Activated naive CD4-positive, alpha-beta T cell treated with anti-CD3 and anti-CD28 coated beads for 36 hours (primary cell): ENCODE measurements at regions of chr1 and their contacts with region 1.

Region 1: GRCh38 chr1:45018599-45019230 is 6.7 kb downstream of the UROD start:
- DNase-seq: peak; percentile 81
- H3K4me3 Mint-ChIP-seq: no peak overlapping the region
- H3K27ac Mint-ChIP-seq: no peak overlapping the region
- H3K4me1 Mint-ChIP-seq: peaks cover 13% of the 10 kb centered on the region
- H3K27me3 Mint-ChIP-seq: no peaks in the 10 kb centered on the region

Region 2: GRCh38 chr1:45033356-45033755 is 14.6 kb after region 1 on chr1:
- CTCF ChIA-PET with region 1: interaction called, 16 read pairs
- intact Hi-C with region 1: no loop called
- DNase-seq: no peak
- H3K4me3 Mint-ChIP-seq: no peak overlapping the region
- H3K27ac Mint-ChIP-seq: no peak overlapping the region
- H3K4me1 Mint-ChIP-seq: peaks cover 2% of the 10 kb centered on the region
- H3K27me3 Mint-ChIP-seq: no peaks in the 10 kb centered on the region

Region 3: GRCh38 chr1:45103534-45103933 is 84.8 kb after region 1 on chr1:
- CTCF ChIA-PET with region 1: no interaction called
- intact Hi-C with region 1: no loop called
- DNase-seq: no peak
- H3K4me3 Mint-ChIP-seq: no peak overlapping the region
- H3K27ac Mint-ChIP-seq: no peak overlapping the region
- H3K4me1 Mint-ChIP-seq: peaks cover 8% of the 10 kb centered on the region
- H3K27me3 Mint-ChIP-seq: no peaks in the 10 kb centered on the region

Region 4: GRCh38 chr1:45230540-45230939 is 211.8 kb after region 1 on chr1:
- CTCF ChIA-PET with region 1: interaction called, 6 read pairs
- intact Hi-C with region 1: loop called (anchors 1 kb)
- DNase-seq: peak; percentile 47
- H3K4me3 Mint-ChIP-seq: no peak overlapping the region
- H3K27ac Mint-ChIP-seq: no peak overlapping the region
- H3K4me1 Mint-ChIP-seq: no peaks in the 10 kb centered on the region
- H3K27me3 Mint-ChIP-seq: no peaks in the 10 kb centered on the region

Region 5: GRCh38 chr1:45339789-45340570 is 321.3 kb after region 1 on chr1 and contains the starts of genes MUTYH and TOE1:
- CTCF ChIA-PET with region 1: interaction called, 17 read pairs
- intact Hi-C with region 1: no loop called
- DNase-seq: peak; percentile 95
- H3K4me3 Mint-ChIP-seq: peak within 1 kb of the TSS; percentile 100
- H3K27ac Mint-ChIP-seq: peak within 1 kb of the TSS; percentile 100
- H3K4me1 Mint-ChIP-seq: peaks cover 35% of the 10 kb centered on the region
- H3K27me3 Mint-ChIP-seq: no peaks in the 10 kb centered on the region
- total RNA-seq, gene MUTYH: 42.0 to 45.0 TPM
- total RNA-seq, gene TOE1: 23.0 to 23.8 TPM